ENCODE measurements at regions of chr4 and their contacts with region 1.

Region 1: GRCh38 chr4:107138433-107138832 is 102.3 kb upstream of the DKK2 start:
- DNase-seq: no peak
- ATAC-seq: no peak
- H3K4me3 ChIP-seq: no peak overlapping the region
- H3K27ac ChIP-seq: no peak overlapping the region
- H3K4me1 ChIP-seq: no peaks in the 10 kb centered on the region
- H3K27me3 ChIP-seq: no peaks in the 10 kb centered on the region

Region 2: GRCh38 chr4:107155366-107155765 is 16.9 kb after region 1 on chr4:
- intact Hi-C with region 1: loop called in 1 of 2 experiments (anchors 1 kb)
- DNase-seq: no peak
- ATAC-seq: no peak
- H3K4me3 ChIP-seq: no peak overlapping the region
- H3K27ac ChIP-seq: no peak overlapping the region
- H3K4me1 ChIP-seq: no peaks in the 10 kb centered on the region
- H3K27me3 ChIP-seq: no peaks in the 10 kb centered on the region

Region 3: GRCh38 chr4:107818301-107818910 is 680.0 kb after region 1 on chr4:
- intact Hi-C with region 1: no loop called
- DNase-seq: no peak
- ATAC-seq: no peak
- H3K4me3 ChIP-seq: no peak overlapping the region
- H3K27ac ChIP-seq: no peak overlapping the region
- H3K4me1 ChIP-seq: no peaks in the 10 kb centered on the region
- H3K27me3 ChIP-seq: no peaks in the 10 kb centered on the region

Measured in aorta (tissue), 5 donors.